PC-9 (cell line): ENCODE measurements at regions of chr2 and their contacts with region 1.

Region 1: GRCh38 chr2:44955593-44956392 is 14.3 kb downstream of the SIX3 start:
- DNase-seq: peak; percentile 58 to 83
- H3K4me3 ChIP-seq: peak overlapping the region; percentile 49; the same call in 1 of the 2 replicates
- H3K27ac ChIP-seq: no peak overlapping the region
- H3K4me1 ChIP-seq: peaks cover 10% of the 10 kb centered on the region
- H3K27me3 ChIP-seq: no peaks in the 10 kb centered on the region
- CTCF ChIP-seq: peak; percentile 91

Region 2: GRCh38 chr2:43611987-43612894 is 1343.6 kb before region 1 on chr2:
- CTCF ChIA-PET with region 1: no interaction called
- POLR2A ChIA-PET with region 1: no interaction called
- intact Hi-C with region 1: loop called (anchors 10 kb)
- DNase-seq: peak; percentile 77 to 79
- H3K4me3 ChIP-seq: no peak overlapping the region
- H3K27ac ChIP-seq: no peak overlapping the region
- H3K4me1 ChIP-seq: 0 out of 2 replicates have a peak, but pooled peaks cover 3% of the 10 kb centered on the region
- H3K27me3 ChIP-seq: no peaks in the 10 kb centered on the region
- CTCF ChIP-seq: peak; percentile 96

Region 3: GRCh38 chr2:43877782-43878464 is 1077.9 kb before region 1 on chr2:
- CTCF ChIA-PET with region 1: no interaction called
- POLR2A ChIA-PET with region 1: no interaction called
- intact Hi-C with region 1: loop called (anchors 10 kb)
- DNase-seq: peak; percentile 64 to 71
- H3K4me3 ChIP-seq: no peak overlapping the region
- H3K27ac ChIP-seq: no peak overlapping the region
- H3K4me1 ChIP-seq: peaks cover 16% of the 10 kb centered on the region
- H3K27me3 ChIP-seq: peaks cover 42% of the 10 kb centered on the region
- CTCF ChIP-seq: peak; percentile 99

Region 4: GRCh38 chr2:44087036-44087713 is 868.6 kb before region 1 on chr2:
- CTCF ChIA-PET with region 1: no interaction called
- POLR2A ChIA-PET with region 1: no interaction called
- intact Hi-C with region 1: loop called (anchors 5 kb)
- DNase-seq: peak; percentile 66 to 87
- H3K4me3 ChIP-seq: peak overlapping the region; percentile 42; the same call in 1 of the 2 replicates
- H3K27ac ChIP-seq: no peak overlapping the region
- H3K4me1 ChIP-seq: peaks cover 10% of the 10 kb centered on the region; the same call in 1 of the 2 replicates
- H3K27me3 ChIP-seq: no peaks in the 10 kb centered on the region
- CTCF ChIP-seq: peak; percentile 99

Region 5: DNA sequence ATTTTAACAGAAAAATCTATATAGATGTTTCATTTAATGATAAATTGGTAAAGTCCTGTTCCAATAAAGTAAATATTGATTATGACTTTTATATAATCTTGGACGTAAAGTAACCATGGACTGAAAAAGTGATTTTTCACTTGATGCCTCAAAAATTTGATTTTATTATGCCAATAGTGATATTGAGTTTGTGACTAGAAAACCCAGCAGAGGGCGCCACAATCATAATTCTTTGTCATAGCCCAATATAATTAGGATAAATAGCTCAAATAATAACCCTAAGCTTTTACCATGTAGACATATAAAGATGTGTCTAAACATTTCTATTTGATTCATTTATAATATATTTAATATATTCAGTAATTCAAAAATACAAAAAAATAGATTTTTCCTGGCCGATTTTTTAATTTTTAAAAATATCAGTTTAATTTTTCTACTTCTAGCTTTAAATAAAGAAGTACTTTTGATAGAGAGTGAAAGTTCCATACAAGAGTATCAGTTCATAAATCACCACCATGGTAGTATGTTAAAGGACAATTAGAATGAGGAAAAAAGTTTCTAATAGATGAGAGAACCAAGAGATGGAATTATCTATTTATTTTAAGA is 563.4 kb before region 1 on chr2:
- CTCF ChIA-PET with region 1: interaction called, 32 read pairs
- POLR2A ChIA-PET with region 1: no interaction called
- intact Hi-C with region 1: loop called (anchors 1 kb)
- DNase-seq: peak in 1 of 2 experiments; percentile 46
- H3K4me3 ChIP-seq: no peak overlapping the region
- H3K27ac ChIP-seq: no peak overlapping the region
- H3K4me1 ChIP-seq: no peaks in the 10 kb centered on the region
- H3K27me3 ChIP-seq: no peaks in the 10 kb centered on the region
- CTCF ChIP-seq: peak; percentile 94

Region 6: DNA sequence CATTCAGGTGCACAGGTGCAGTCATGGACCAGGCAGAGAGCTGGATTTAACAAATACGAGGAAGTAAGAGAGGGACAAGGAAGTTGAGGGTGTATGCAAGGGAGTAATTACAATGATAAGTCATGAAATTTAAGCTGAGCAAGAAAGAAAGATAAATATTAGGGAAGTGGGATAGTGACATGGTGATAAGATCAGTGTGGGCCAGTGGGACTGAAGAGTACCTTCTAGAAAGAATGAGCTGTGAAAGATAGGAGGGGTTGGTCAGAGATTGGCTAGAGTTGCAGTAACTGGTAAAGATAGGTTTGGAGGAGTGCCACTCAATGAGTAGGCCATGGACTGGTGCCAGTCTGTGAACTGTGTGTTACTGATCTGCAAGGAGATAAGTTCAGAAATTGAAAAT is 215.1 kb before region 1 on chr2:
- CTCF ChIA-PET with region 1: no interaction called
- POLR2A ChIA-PET with region 1: no interaction called
- intact Hi-C with region 1: loop called (anchors 10 kb)
- DNase-seq: peak; percentile 11 to 71
- H3K4me3 ChIP-seq: no peak overlapping the region
- H3K27ac ChIP-seq: no peak overlapping the region
- H3K4me1 ChIP-seq: peaks cover 25% of the 10 kb centered on the region
- H3K27me3 ChIP-seq: no peaks in the 10 kb centered on the region
- CTCF ChIP-seq: no peak

Region 7: GRCh38 chr2:45571940-45572339 is 616.1 kb after region 1 on chr2:
- CTCF ChIA-PET with region 1: interaction called, 13 read pairs
- POLR2A ChIA-PET with region 1: no interaction called
- intact Hi-C with region 1: no loop called
- DNase-seq: no peak
- H3K4me3 ChIP-seq: no peak overlapping the region
- H3K27ac ChIP-seq: no peak overlapping the region
- H3K4me1 ChIP-seq: no peaks in the 10 kb centered on the region
- H3K27me3 ChIP-seq: no peaks in the 10 kb centered on the region
- CTCF ChIP-seq: no peak